Posterior vena cava (tissue), 2 donors: ENCODE measurements at regions of chr20 and their contacts with region 1.

Region 1: GRCh38 chr20:47914792-47915191 is 129.5 kb upstream of the SULF2 start:
- DNase-seq: no peak

Region 2: DNA sequence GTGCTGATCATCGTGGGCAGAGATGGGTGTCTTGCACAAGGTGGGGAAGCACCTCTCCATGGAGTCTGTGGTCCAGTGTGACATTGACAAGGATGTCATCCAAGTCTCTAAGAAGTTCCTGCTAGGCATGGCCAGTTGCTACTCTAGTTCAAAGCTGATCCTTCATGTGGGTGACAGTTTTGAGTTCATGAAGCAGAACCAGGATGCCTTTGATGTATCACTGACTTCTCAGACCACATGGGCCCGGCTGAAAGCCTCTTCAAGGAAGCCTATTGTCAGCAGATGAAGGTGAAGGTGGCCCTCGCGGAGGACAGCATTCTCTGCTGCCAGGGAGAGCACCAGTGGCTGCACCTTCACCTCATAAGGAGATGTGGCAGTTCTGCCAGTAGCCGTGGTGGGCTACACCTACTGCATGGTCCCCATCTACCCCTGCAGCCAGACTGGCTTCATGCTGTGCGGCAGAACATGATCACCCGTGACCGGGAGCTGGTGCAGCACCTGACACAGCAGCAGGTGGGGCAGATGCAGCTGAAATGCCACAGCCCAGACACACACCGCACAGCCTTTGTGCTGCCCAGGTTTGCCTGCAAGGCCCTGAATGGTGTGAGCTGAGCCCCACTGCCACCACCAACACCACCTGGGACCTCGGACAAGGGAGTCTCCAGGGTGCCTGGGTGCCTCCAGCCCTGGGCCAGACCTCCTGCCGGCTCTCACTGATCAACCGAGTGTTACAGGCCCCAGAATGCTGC is 54.6 kb before region 1 on chr20:
- intact Hi-C with region 1: loop called in 1 of 2 experiments (anchors 10 kb)
- DNase-seq: no peak